Lower leg skin (tissue), 4 donors: ENCODE measurements at regions of chr17 and their contacts with region 1.

Region 1: DNA sequence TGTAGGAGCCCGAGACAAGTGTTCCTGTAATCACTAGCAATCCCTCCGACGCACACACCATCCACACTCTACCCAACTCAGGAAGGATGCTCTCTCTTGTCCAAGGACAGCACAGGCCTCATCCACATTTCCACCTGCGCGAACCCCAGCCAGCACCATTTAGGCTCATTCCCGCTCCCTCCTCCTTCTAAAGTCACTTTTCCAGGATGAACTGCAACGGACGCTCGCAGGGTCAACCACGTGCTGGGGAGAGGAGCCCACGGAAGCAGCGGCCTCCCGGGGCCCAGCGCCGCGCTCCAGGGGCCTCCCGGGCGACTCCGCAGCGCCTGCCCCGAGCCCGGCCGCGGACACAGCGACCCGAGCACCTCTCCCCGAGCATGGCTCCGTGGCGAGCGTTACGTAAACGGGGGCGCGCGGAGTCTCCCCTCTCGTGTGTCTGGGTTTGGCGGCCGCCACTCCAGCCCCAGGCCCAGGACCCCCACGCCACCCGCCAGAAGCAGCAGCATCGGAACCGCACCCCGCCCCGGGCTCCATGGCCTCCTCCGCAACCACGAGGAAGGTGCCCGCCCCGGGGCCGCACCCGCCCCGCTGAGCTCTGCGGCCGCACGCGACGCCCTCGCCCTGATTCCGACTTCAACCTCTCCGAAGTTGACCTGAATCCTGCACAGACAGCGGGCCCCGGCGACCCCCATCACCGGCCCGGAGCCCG is 698 bp downstream of the USP36 start:
- DNase-seq: peak; percentile 43 to 94
- H3K4me3 ChIP-seq: peak overlapping the region; percentile 75
- CTCF ChIP-seq: no peak
- POLR2A ChIP-seq: no peak

Region 2: GRCh38 chr17:77088455-77089123 is 1751.3 kb before region 1 on chr17:
- intact Hi-C with region 1: no loop called
- DNase-seq: peak; percentile 95 to 98
- H3K4me3 ChIP-seq: peak overlapping the region; percentile 82
- CTCF ChIP-seq: peak in 1 of 3 donors; percentile 62
- POLR2A ChIP-seq: no peak

Region 3: DNA sequence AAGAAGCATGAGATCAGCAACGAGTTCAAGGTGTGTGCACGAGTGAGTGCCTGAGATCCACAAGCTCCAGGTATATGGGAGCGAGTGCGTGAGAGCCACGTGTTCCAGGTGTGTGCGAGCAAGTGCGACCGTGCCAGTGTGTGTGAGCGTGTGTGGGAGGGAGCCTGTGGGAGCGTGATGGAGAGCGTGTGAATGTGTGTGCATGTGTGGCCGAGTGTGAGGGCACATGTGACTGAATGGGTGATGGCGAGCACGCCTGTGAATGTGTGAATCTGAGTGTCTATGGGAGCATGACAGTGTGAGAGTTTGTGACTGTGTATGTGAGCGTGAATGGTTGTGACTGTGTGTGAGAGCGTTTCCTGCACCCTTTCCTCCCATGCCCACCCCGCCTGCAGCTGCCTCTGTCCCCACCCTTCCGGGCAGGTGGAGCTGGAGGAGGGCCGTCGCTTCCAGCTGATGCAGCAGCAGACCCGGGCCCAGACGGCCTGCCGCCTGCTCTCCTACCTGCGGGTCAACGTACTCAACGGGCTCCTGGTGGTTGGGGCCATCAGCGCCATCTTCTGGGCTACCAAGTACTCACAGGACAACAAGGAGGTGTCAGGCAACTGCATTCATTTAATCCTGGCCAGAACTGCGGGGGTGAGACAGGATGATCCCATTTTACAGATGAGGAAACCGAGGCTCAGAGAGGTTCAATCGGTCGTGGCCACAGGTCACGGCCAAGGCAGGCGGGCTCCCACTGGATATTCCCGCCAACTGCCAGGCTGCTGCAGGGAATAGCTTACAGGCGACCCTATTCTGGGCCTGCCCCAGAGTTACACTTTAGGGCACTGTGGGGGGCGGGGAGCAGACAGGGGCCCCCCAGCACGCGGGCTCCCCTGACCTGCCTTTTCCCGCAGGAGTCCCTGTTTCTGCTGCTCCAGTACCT is 705.7 kb before region 1 on chr17:
- intact Hi-C with region 1: no loop called
- DNase-seq: peak in 1 of 2 donors; percentile 89
- H3K4me3 ChIP-seq: no peak overlapping the region
- CTCF ChIP-seq: peak in 1 of 3 donors; percentile 6
- POLR2A ChIP-seq: no peak

Region 4: GRCh38 chr17:78214706-78215061 is 625.2 kb before region 1 on chr17:
- intact Hi-C with region 1: loop called (anchors 5 kb)
- DNase-seq: no peak
- H3K4me3 ChIP-seq: peak overlapping the region; percentile 17
- CTCF ChIP-seq: no peak
- POLR2A ChIP-seq: no peak

Region 5: GRCh38 chr17:78294776-78295175 is 545.1 kb before region 1 on chr17:
- intact Hi-C with region 1: no loop called
- DNase-seq: no peak
- H3K4me3 ChIP-seq: no peak overlapping the region
- CTCF ChIP-seq: no peak
- POLR2A ChIP-seq: no peak

Region 6: GRCh38 chr17:78645421-78646295 is 194.3 kb before region 1 on chr17:
- intact Hi-C with region 1: no loop called
- DNase-seq: peak; percentile 68 to 91
- H3K4me3 ChIP-seq: no peak overlapping the region
- CTCF ChIP-seq: no peak
- POLR2A ChIP-seq: no peak